WTC11 (cell line): ENCODE measurements at regions of chr19 and their contacts with region 1.

Region 1: DNA sequence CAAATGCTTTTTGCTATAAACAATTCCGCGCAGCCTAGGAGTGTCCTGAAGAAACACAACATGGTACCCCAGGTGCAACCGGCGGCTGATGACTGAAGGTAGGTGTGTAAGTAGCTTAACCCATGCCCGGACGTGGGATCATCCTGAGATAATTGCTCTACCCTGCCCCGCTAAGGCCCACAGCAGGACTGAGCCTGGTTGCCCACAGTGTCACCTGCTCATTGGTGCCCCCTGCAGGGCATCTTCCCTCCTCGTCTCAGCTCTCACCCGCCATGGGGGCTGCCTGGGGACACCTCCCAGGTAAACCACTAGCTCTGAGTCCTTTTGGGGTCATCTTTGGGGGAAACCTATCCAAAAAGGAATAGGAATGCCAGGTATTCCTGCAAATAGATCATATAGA is 22.3 kb downstream of the TMEM161A start:
- DNase-seq: peak; percentile 88
- ATAC-seq: no peak
- H3K4me3 Mint-ChIP-seq: no peak overlapping the region
- H3K27ac Mint-ChIP-seq: no peak overlapping the region
- H3K4me1 Mint-ChIP-seq: peaks cover 13% of the 10 kb centered on the region
- H3K27me3 Mint-ChIP-seq: peaks cover 20% of the 10 kb centered on the region
- CTCF ChIP-seq: peak; percentile 57

Region 2: DNA sequence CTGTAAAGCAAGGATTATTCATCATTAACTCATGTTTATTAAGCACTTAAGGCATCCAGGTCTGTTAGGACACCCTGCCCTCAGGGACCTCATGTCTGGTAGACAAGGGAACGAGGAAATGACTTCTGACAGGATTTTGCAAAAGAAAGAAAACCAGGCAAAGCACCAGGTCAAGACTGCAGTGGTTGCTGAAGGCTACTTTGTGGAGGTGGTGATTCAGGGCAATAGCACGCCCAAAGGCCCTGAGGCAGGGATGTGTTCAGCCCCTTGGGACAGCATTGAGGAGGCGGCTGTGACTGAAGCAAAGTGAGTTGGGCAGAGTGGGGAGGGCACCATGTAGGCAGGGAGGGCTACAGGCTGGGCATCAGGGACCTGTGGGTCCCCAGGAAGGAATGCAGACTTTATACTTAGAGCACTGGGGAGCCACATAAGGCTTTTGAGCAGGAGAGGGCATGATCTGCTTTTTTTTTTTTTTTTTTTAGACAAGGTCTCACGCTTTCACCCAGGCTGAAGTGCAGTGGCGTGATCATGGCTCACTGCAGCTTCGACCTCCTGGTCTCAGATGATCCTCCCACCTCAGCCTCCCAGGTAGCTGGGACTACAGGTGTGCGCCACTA is 164.2 kb before region 1 on chr19:
- CTCF ChIA-PET with region 1: no interaction called
- POLR2A ChIA-PET with region 1: no interaction called
- DNase-seq: no peak
- ATAC-seq: no peak
- H3K4me3 Mint-ChIP-seq: no peak overlapping the region
- H3K27ac Mint-ChIP-seq: no peak overlapping the region
- H3K4me1 Mint-ChIP-seq: no peaks in the 10 kb centered on the region
- H3K27me3 Mint-ChIP-seq: peaks cover 4% of the 10 kb centered on the region
- CTCF ChIP-seq: no peak

Region 3: GRCh38 chr19:19053508-19054314 is 62.2 kb before region 1 on chr19:
- CTCF ChIA-PET with region 1: interaction called, 18 read pairs
- POLR2A ChIA-PET with region 1: no interaction called
- DNase-seq: peak; percentile 84
- ATAC-seq: peak; percentile 84
- H3K4me3 Mint-ChIP-seq: no peak overlapping the region
- H3K27ac Mint-ChIP-seq: no peak overlapping the region
- H3K4me1 Mint-ChIP-seq: no peaks in the 10 kb centered on the region
- H3K27me3 Mint-ChIP-seq: no peaks in the 10 kb centered on the region
- CTCF ChIP-seq: peak; percentile 73; the same call in 1 of the 2 replicates

Region 4: GRCh38 chr19:19068659-19069654 is 47.0 kb before region 1 on chr19:
- CTCF ChIA-PET with region 1: interaction called, 15 read pairs
- POLR2A ChIA-PET with region 1: no interaction called
- DNase-seq: no peak
- ATAC-seq: no peak
- H3K4me3 Mint-ChIP-seq: no peak overlapping the region
- H3K27ac Mint-ChIP-seq: no peak overlapping the region
- H3K4me1 Mint-ChIP-seq: peaks cover 11% of the 10 kb centered on the region
- H3K27me3 Mint-ChIP-seq: peaks cover 98% of the 10 kb centered on the region
- CTCF ChIP-seq: no peak

Region 5: DNA sequence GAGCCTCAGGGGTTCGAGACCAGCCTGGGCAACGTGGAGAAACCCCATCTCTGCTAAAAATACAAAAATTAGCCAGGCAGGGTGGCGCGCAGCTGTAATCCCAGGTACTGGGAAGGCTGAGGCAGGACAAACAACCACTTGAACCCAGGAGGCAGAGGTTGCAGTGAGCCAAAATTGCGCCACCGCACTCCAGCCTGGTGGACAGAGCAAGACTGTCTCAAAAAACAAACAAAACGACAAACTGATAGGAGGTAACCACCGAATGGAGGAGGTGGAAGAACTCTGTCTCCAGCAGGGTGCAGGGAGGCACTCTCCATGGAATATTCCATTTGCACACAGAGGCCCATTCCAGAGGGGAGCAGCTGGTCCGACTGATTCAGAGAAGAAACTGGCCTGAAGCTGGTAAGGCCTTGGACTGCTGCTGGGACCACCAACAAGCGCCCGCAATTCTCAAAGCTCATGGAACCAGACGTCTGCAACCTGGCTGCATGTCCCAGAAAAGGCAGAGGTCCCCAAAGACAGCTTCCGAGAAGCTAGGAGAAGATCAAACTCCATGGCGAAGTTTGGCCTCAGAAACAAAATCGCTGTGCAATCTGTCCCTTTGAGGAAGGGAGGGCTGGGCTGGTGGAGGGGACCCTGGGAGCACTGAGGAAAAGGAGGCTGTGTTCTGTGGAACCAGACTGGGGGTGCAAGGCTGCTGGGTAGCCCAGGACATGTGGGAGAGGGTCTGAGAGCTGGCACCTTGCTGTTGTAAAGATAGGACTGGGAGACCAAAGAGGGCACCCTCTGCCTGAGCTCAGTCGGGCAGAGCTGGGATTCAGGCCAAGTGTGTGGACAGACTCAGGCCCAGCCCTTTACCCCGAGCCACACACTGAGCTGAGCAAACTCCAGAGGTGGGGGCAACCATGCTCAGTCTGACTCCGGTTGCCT is 17.0 kb before region 1 on chr19:
- CTCF ChIA-PET with region 1: interaction called, 13 read pairs
- POLR2A ChIA-PET with region 1: no interaction called
- DNase-seq: no peak
- ATAC-seq: no peak
- H3K4me3 Mint-ChIP-seq: no peak overlapping the region
- H3K27ac Mint-ChIP-seq: no peak overlapping the region
- H3K4me1 Mint-ChIP-seq: no peaks in the 10 kb centered on the region
- H3K27me3 Mint-ChIP-seq: peaks cover 11% of the 10 kb centered on the region
- CTCF ChIP-seq: no peak

Region 6: DNA sequence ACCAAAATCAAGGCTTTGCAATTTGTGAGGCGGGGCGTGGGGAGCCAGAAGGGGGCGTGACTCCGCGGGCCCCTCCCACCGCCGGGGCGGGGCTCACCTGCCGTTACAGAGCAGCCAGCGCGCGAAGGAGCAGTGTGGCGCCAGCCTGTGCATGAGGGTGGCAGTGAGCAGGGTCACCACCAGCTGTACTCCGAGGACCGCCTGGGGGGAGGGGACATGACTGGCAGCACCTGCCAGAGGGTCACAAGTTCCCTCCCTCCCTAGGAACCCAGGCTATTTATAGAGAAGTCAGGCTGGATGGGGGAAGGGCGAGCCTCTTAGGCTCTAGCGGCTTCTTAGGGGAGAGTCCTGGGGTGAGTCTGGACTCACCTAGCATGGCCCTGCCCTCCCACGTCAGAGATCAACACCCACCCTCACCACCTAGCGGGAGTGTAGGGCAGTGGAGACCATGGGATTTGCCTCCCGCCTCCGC is 18.8 kb after region 1 on chr19:
- CTCF ChIA-PET with region 1: interaction called, 10 read pairs
- POLR2A ChIA-PET with region 1: no interaction called
- DNase-seq: peak; percentile 82
- ATAC-seq: peak; percentile 68
- H3K4me3 Mint-ChIP-seq: peak overlapping the region; percentile 60
- H3K27ac Mint-ChIP-seq: no peak overlapping the region
- H3K4me1 Mint-ChIP-seq: peaks cover 18% of the 10 kb centered on the region
- H3K27me3 Mint-ChIP-seq: peaks cover 20% of the 10 kb centered on the region
- CTCF ChIP-seq: no peak

Region 7: DNA sequence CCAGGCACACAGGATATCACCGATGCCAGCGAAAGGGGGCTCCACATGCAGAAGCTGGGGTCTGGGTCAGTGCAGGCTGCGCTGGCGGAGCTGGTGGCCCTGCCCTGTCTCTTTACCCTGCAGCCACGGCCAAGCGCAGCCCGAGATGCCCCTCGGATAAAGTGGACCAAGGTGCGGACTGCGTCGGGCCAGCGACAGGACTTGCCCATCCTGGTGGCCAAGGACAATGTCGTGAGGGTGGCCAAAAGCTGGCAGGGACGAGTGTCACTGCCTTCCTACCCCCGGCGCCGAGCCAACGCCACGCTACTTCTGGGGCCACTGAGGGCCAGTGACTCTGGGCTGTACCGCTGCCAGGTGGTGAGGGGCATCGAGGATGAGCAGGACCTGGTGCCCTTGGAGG is 103.0 kb after region 1 on chr19:
- CTCF ChIA-PET with region 1: no interaction called
- POLR2A ChIA-PET with region 1: no interaction called
- DNase-seq: no peak
- ATAC-seq: no peak
- H3K4me3 Mint-ChIP-seq: no peak overlapping the region
- H3K27ac Mint-ChIP-seq: no peak overlapping the region
- H3K4me1 Mint-ChIP-seq: peaks cover 6% of the 10 kb centered on the region
- H3K27me3 Mint-ChIP-seq: peaks cover 41% of the 10 kb centered on the region
- CTCF ChIP-seq: no peak